GM10248 (cell line): ENCODE measurements at regions of chr9 and their contacts with region 1.

Region 1: DNA sequence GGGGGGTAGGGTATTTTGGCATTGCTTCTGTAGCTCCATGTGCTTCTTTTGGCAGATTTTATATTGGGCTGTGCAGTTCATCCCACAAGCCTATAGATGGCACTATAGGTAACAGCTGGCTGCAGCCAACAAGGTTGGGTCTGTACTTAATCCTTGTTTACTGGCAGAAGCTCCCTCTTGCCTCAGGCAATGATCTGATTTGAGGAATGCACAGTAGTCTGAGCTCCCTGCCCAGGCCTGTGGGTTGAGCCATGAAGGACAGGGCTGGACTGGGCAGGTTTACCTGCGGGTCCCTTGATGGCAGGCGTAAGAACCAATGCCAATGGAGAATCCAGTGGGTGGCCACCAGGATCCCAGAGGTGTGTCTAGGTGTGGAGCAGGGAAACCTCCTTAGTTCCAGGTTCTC is 11.7 kb upstream of the OR1J2 start:
- DNase-seq: peak; percentile 35
- CTCF ChIP-seq: peak; percentile 69

Region 2: GRCh38 chr9:122228568-122229484 is 270.1 kb before region 1 on chr9 and contains the start of gene LHX6:
- CTCF ChIA-PET with region 1: no interaction called
- POLR2A ChIA-PET with region 1: no interaction called
- DNase-seq: peak; percentile 24
- CTCF ChIP-seq: no peak

Region 3: GRCh38 chr9:122526600-122526999 is 27.7 kb after region 1 on chr9:
- CTCF ChIA-PET with region 1: interaction called, 23 read pairs
- POLR2A ChIA-PET with region 1: no interaction called
- DNase-seq: no peak
- CTCF ChIP-seq: no peak

Region 4: DNA sequence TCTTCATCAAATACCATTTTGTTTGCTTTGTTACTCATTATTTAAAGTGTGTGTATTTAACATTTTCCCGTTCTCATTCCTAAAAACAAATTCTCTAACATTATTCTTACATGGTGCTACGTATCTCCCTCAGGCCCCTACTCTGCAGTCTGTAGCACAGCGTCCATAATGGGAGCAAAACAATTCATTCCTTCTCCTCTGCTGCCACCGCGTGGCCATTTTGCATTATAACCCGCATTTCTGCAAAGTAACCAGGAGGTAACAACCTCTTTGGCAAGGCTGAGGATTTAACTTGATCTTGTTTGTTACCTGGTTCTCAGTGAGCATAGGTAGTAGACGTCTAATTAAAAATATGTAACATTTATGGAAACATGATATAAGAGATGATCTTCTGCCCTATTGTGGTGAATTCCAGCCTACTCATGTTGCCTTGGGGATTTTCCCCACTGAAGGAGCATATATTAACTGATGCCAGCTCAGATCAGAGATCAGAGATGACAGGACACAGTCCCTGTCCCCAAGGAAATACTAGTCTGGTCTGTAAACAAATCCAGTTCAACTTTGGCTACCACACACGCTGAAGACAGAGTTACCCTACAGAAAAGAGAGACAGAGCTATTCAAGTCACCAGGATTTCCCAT is 311.5 kb after region 1 on chr9:
- CTCF ChIA-PET with region 1: interaction called, 10 read pairs
- POLR2A ChIA-PET with region 1: no interaction called
- DNase-seq: peak; percentile 82
- CTCF ChIP-seq: peak; percentile 89